Activated naive CD8-positive, alpha-beta T cell treated with anti-CD3 and anti-CD28 coated beads, Interleukin-2, amount 10 ng/mL, durations not matched to agents 7 days and 5 days (primary cell): ENCODE measurements at regions of chr12 and their contacts with region 1.

Region 1: GRCh38 chr12:56299853-56300643 is at the start of gene CS:
- DNase-seq: peak; percentile 98
- ATAC-seq: peak; percentile 96
- H3K4me3 Mint-ChIP-seq: peak within 1 kb of the TSS; percentile 96
- H3K27ac Mint-ChIP-seq: peak within 1 kb of the TSS; percentile 92
- H3K4me1 Mint-ChIP-seq: peaks cover 35% of the 10 kb centered on the region
- H3K27me3 Mint-ChIP-seq: no peaks in the 10 kb centered on the region
- total RNA-seq, gene CS: 165 to 176 TPM

Region 2: GRCh38 chr12:55940065-55940732 is 359.8 kb before region 1 on chr12:
- POLR2A ChIA-PET with region 1: no interaction called
- DNase-seq: peak; percentile 78
- ATAC-seq: peak; percentile 88
- H3K4me3 Mint-ChIP-seq: peak overlapping the region; percentile 54
- H3K27ac Mint-ChIP-seq: peak overlapping the region; percentile 81
- H3K4me1 Mint-ChIP-seq: peaks cover 68% of the 10 kb centered on the region
- H3K27me3 Mint-ChIP-seq: no peaks in the 10 kb centered on the region

Region 3: GRCh38 chr12:56062996-56063395 is 237.1 kb before region 1 on chr12:
- POLR2A ChIA-PET with region 1: no interaction called
- DNase-seq: no peak
- ATAC-seq: no peak
- H3K4me3 Mint-ChIP-seq: no peak overlapping the region
- H3K27ac Mint-ChIP-seq: no peak overlapping the region
- H3K4me1 Mint-ChIP-seq: no peaks in the 10 kb centered on the region
- H3K27me3 Mint-ChIP-seq: peaks cover 4% of the 10 kb centered on the region

Region 4: DNA sequence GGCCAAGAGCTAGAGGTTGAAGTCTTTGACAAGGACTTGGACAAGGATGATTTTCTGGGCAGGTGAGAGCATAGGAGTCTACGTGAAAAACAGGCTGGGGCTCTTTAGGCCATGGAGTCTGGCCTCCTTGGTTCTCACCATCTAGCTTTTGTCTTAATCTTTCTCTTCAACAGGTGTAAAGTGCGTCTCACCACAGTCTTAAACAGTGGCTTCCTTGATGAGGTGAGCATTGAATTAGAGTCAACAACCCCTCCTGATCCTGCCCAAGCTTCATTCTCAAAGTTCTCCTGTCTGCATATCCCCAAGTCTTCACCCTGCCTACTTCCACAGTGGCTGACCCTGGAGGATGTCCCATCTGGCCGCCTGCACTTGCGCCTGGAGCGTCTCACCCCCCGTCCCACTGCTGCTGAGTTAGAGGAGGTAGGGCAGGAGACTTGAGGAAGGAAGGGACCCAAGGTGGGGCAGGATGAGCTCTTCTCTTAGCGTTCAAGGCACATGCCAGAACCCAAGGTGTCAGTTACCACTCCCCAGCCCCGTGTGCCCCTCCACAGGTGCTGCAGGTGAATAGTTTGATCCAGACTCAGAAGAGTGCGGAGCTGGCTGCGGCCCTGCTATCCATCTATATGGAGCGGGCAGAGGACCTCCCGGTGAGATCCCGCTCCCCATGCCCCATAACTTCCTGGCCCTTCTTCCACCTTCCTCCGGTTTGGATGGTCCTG is 162.0 kb before region 1 on chr12:
- POLR2A ChIA-PET with region 1: no interaction called
- DNase-seq: no peak
- ATAC-seq: no peak
- H3K4me3 Mint-ChIP-seq: peak overlapping the region; percentile 29
- H3K27ac Mint-ChIP-seq: peak overlapping the region; percentile 88
- H3K4me1 Mint-ChIP-seq: peaks cover 57% of the 10 kb centered on the region
- H3K27me3 Mint-ChIP-seq: no peaks in the 10 kb centered on the region

Region 5: GRCh38 chr12:56266693-56267442 is 33.2 kb before region 1 on chr12 and contains the start of gene COQ10A:
- POLR2A ChIA-PET with region 1: interaction called, 15 read pairs
- DNase-seq: peak; percentile 91
- ATAC-seq: peak; percentile 92
- H3K4me3 Mint-ChIP-seq: peak within 1 kb of the TSS; percentile 95
- H3K27ac Mint-ChIP-seq: peak within 1 kb of the TSS; percentile 82
- H3K4me1 Mint-ChIP-seq: peaks cover 16% of the 10 kb centered on the region
- H3K27me3 Mint-ChIP-seq: no peaks in the 10 kb centered on the region
- total RNA-seq, gene COQ10A: 23.3 to 26.0 TPM

Region 6: DNA sequence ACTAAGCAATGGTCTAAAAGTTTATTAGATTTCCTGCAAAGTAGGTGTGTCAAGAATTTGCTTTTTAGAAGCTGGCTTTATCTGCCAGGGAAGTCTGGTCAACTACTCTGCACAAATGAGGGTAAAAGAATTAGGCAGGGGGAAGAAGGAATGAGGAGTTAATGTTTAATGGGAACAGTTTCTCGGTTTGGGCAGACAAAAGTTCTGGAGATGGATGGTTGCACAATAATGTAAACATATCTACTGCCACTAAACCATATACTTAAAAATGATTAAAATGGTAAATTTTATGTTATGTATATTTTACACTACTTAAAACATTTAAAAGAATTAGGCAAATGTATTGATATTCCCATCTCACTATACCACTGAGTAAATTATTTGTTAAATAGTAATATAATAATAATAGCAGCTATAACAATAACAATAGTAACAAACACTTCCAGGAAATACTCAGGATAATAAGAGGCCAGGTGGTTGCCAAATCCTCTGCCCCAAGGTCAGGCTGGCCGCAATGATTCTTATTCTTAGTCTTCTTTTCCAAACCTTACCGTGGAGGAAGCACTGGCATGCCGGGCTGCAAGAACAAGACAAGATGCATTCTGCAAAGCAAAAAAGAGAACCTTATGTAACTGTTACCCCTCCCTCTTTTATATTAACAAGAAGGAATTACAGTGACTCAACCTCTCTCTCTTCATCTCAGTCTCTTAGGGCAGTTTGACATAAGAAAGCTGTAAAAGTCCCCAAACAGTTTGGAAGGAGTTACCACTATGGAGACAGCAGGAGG is 13.8 kb before region 1 on chr12:
- POLR2A ChIA-PET with region 1: interaction called, 16 read pairs
- DNase-seq: no peak
- ATAC-seq: no peak
- H3K4me3 Mint-ChIP-seq: no peak overlapping the region
- H3K27ac Mint-ChIP-seq: peak overlapping the region; percentile 44
- H3K4me1 Mint-ChIP-seq: peaks cover 11% of the 10 kb centered on the region
- H3K27me3 Mint-ChIP-seq: no peaks in the 10 kb centered on the region

Region 7: DNA sequence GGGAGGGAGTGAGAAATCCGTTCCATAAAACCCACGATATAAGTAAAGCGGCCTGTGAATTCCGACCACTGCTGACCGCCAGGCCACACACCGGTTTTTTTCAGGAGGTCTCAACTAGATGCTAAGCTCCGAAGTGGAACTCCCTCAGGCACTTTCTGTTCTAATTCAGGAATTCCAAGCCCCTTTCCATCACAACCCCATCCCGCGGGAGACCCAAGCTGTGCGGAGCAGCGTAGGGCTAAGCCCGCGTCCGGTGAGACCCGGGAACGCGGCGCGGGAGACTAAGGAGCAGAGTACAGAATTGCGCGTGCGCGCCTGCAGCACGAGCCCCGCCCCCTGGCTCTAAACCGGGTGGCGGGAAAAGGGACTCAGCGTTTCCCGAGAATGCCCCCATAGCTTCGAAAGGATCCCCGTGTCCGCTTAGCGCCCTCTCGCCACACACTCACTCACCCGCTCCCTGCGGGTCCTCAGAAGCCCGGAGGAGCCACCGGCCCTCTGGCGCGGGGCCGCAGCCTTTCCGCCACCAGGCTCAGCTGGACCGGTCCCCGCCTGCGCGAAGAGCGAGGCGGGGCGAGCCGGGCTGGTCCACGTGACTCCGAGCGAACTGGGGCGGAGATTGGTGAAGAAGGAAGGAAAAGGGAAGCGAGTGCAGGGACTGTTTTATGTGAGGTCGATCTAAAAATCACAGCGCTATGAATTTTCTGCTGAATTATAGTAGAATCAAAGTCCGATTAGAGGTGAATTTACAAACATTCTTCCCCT is 149.0 kb after region 1 on chr12 and contains the start of gene TIMELESS:
- POLR2A ChIA-PET with region 1: no interaction called
- DNase-seq: peak; percentile 90
- ATAC-seq: peak; percentile 98
- H3K4me3 Mint-ChIP-seq: peak within 1 kb of the TSS; percentile 92
- H3K27ac Mint-ChIP-seq: peak within 1 kb of the TSS; percentile 85
- H3K4me1 Mint-ChIP-seq: peaks cover 27% of the 10 kb centered on the region
- H3K27me3 Mint-ChIP-seq: peaks cover 2% of the 10 kb centered on the region
- total RNA-seq, gene TIMELESS: 40.1 to 47.1 TPM